Activated naive CD4-positive, alpha-beta T cell treated with anti-CD3 and anti-CD28 coated beads for 36 hours (primary cell): ENCODE measurements at regions of chr19 and their contacts with region 1.

Region 1: DNA sequence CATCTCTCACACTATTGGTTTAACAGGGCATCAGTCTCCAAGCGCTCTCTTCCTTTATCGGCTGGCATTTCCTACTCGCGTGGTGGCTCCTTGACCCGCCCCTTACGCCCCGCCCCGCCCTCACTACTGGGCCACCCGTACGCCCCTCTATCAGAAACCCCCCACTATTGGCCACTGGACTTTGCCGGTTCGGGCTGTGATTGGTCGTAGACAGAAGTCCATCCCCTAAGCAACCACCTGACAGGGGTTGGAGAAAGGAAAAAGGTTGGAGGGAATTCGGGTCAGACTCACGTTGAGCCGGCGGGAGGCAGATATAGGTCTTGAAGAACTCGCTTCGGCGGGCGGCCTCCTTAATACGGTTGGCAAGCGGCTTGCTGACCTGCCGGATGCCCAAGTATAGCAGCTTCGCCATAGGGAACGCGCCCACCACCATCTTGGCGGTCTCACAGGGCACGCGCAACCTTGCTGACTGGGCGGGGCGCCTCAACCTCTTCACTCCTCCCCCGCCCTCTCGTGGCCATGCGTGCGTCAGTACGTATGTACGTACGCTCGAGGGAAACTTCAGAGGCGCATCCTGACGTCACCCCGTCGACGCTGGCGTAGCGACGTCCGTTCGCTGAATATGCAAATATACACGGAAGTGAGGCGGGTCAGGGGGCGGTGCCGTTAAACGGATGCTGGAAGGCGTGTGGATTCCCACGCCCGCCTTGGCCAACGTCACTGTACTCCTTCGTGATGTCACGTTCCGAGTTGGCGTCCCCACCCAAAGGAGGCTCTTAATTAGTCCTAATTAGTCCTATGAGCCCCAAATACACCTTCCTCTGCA is at the start of gene OPA3:
- DNase-seq: peak; percentile 100
- H3K4me3 Mint-ChIP-seq: peak within 1 kb of the TSS; percentile 89
- H3K27ac Mint-ChIP-seq: peak within 1 kb of the TSS; percentile 98
- H3K4me1 Mint-ChIP-seq: peaks cover 14% of the 10 kb centered on the region
- H3K27me3 Mint-ChIP-seq: peaks cover 3% of the 10 kb centered on the region
- total RNA-seq, gene OPA3: 12.4 to 12.7 TPM

Region 2: GRCh38 chr19:45001087-45001739 is 583.3 kb before region 1 on chr19 and contains the start of gene RELB:
- CTCF ChIA-PET with region 1: no interaction called
- intact Hi-C with region 1: loop called (anchors 5 kb)
- DNase-seq: peak; percentile 95
- H3K4me3 Mint-ChIP-seq: peak within 1 kb of the TSS; percentile 95
- H3K27ac Mint-ChIP-seq: peak within 1 kb of the TSS; percentile 98
- H3K4me1 Mint-ChIP-seq: peaks cover 17% of the 10 kb centered on the region
- H3K27me3 Mint-ChIP-seq: no peaks in the 10 kb centered on the region
- total RNA-seq, gene RELB: 55.4 to 57.3 TPM

Region 3: GRCh38 chr19:45405435-45406225 is 178.9 kb before region 1 on chr19:
- CTCF ChIA-PET with region 1: no interaction called
- intact Hi-C with region 1: loop called (anchors 1 kb)
- DNase-seq: peak; percentile 90
- H3K4me3 Mint-ChIP-seq: peak overlapping the region; percentile 93
- H3K27ac Mint-ChIP-seq: peak overlapping the region; percentile 93
- H3K4me1 Mint-ChIP-seq: peaks cover 44% of the 10 kb centered on the region
- H3K27me3 Mint-ChIP-seq: peaks cover 30% of the 10 kb centered on the region

Region 4: GRCh38 chr19:45496349-45496953 is 88.1 kb before region 1 on chr19:
- CTCF ChIA-PET with region 1: no interaction called
- intact Hi-C with region 1: loop called (anchors 1 kb)
- DNase-seq: peak; percentile 56
- H3K4me3 Mint-ChIP-seq: peak overlapping the region; percentile 55
- H3K27ac Mint-ChIP-seq: no peak overlapping the region
- H3K4me1 Mint-ChIP-seq: peaks cover 32% of the 10 kb centered on the region
- H3K27me3 Mint-ChIP-seq: peaks cover 27% of the 10 kb centered on the region

Region 5: GRCh38 chr19:45632468-45633196 is 48.1 kb after region 1 on chr19:
- CTCF ChIA-PET with region 1: interaction called, 3 read pairs
- intact Hi-C with region 1: loop called (anchors 1 kb)
- DNase-seq: peak; percentile 69
- H3K4me3 Mint-ChIP-seq: peak overlapping the region; percentile 21
- H3K27ac Mint-ChIP-seq: peak overlapping the region; percentile 87
- H3K4me1 Mint-ChIP-seq: peaks cover 20% of the 10 kb centered on the region
- H3K27me3 Mint-ChIP-seq: no peaks in the 10 kb centered on the region

Region 6: DNA sequence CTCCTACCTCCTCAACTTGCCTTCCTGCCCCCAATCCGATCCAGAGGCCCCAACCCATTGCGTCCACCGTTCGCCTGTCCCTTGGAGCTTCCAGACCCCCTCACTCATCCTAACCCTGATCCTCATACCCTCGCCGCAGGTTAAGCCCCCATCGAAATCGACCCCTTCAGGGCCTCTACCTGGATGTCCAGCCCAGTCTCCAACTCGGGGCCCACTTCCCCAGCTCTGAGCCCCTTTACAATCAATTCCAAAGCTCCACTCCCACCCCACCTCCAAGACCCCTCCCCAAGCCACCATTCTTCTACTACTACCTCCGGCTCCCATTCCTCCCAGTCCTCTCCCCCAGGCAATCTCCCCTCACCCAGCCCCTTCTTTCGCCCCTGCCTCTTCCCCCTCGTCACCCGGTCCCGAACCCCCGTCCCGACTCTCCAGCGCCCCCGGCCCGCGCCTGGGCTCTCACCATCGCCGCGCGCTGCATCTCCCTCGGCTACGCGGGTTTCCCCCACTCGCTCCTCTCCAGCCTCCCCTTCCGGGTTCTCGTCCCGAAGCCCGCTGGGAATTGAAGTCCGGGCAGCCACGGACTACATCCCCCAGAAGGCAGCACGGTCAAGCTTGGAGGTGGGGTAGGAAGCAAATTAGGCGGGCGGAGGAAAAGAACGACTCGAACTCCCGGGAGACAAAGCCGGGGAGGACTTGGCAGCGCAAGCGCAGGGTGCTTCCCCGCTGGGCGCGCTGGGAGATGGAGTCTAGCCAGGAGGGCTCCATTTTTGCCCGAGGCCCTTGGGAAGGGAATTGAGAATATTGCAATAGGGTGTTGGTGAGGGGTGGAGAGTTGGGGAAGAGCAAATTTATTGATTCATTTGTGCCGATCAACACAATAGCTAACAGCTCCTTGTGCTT is 146.1 kb after region 1 on chr19 and contains the start of gene FBXO46:
- CTCF ChIA-PET with region 1: no interaction called
- intact Hi-C with region 1: loop called (anchors 1 kb)
- DNase-seq: peak; percentile 99
- H3K4me3 Mint-ChIP-seq: peak within 1 kb of the TSS; percentile 95
- H3K27ac Mint-ChIP-seq: peak within 1 kb of the TSS; percentile 83
- H3K4me1 Mint-ChIP-seq: peaks cover 29% of the 10 kb centered on the region
- H3K27me3 Mint-ChIP-seq: no peaks in the 10 kb centered on the region
- total RNA-seq, gene FBXO46: 21.8 to 23.2 TPM

Region 7: DNA sequence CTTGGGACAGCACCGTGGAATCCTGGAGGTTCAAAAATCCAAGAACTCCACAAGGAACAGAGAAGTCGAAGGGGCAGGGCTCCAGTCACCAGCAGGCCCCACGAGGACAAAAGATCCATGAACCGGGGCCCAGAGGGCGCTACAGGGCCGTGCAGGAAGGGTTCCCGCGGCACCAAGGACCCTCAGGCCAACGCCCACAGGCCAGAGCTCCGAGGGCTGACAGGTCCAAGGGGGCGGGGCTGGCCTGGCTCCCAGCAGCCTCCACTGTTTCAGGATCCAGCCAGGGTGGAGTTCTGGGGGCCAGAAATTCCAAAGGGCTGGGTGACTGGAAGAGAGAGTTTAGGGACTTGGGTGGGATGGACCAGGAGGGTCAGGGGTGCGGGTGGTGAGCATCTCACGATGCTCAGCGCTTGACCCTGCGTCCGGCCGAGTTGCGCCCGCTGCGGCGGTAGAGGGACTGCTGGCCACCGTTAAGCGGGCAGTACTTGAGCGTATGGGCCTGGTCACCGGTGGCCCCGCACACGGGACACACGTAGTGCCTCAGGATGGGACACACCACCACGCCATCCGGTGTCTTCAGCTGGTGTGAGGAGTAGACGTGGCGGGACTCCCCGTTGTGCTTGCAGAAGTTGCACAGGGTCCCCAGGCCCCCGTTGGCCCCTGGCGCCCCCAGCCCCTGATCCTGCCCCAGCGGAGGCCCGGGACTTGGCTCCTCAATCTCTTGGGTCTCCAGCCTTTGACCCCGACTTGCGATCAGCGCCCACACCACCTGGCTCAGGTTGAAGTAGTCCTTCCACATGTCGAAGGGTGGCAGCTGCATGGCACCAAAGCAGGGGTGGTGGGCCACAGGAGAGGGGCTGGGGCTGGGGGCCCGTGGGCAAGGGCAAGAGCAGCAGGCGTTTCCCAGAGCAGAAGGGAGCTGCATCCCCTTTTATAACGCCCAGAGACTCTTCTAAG is 329.6 kb after region 1 on chr19 and contains the start of gene NANOS2:
- CTCF ChIA-PET with region 1: no interaction called
- intact Hi-C with region 1: no loop called
- DNase-seq: no peak
- H3K4me3 Mint-ChIP-seq: no peak within 1 kb of the TSS
- H3K27ac Mint-ChIP-seq: no peak within 1 kb of the TSS
- H3K4me1 Mint-ChIP-seq: no peaks in the 10 kb centered on the region
- H3K27me3 Mint-ChIP-seq: peaks cover 15% of the 10 kb centered on the region
- total RNA-seq, gene NANOS2: not detected